ENCODE measurements at regions of chr10 and their contacts with region 1.

Region 1: DNA sequence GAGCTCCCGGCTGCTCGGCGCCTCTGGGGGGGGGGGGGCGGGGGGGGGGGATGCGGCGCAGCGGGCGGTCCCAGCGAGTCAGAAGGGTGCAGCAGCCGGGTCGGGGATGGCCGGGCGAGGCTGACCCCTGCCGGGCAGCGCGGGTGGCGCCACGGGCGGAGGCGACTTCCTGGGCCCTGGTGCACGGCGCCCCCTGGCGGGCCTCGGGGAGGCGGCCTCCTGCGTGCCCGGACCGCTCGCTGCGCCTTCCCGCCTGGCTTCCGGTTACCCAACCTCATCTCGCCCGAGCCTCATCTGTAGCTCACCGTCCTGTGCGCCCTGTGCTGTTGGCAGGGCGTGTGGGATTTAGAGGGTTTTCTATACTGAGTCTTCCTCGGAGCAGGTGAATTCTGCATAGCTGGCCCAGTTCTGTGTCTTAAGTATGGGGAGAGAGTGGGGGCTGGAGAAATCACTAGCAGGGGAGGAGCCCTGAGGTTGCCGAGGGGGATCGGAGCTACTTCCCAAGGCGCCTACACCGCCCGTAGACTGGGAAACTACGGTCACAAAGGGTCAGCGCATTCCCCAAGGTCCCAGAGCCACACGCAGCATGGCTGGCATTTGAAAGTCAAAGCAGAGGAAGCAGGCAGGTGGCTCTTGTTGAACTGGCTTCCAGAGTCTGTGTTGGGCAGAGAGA is 28.3 kb upstream of the WDFY4 start:
- DNase-seq: peak; percentile 92
- CTCF ChIP-seq: peak; percentile 100

Region 2: DNA sequence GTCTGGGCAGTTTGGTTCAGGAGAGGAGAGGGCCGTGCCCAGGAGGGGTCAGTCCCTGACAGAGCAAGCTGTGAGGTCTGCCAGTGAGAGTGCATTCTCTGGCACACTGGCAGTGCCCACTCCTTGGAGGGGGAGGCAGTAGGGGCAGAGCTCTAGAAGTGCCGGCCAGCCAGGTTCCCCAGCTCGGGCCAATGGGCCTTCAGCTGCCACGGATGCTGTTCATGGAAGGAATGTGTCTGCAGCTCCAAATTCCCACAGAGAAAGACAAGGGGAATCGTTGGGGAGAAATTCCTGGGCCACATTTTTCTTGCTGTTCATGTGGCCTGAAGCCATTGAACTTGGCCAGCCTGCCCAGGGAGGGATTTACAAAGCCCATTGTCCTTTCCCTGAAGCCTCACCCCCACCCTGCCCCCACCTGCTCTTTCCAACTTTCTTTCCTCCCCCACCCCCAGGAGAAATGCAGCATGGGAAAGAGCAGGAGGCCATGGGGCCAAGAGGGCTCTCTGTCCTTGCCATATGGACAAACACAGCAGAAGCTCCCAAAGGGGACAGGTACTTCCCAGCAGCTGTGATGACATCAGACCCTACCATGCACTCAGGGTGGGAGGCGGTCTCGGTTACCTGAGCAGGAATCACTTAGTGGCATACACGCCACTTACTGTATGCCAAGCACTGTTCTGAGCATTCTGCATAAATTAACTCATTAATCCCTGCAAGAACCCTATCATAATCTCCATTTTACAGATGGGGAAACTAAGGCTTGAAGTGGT is 122.2 kb before region 1 on chr10:
- CTCF ChIA-PET with region 1: interaction called, 14 read pairs
- POLR2A ChIA-PET with region 1: no interaction called
- DNase-seq: no peak
- CTCF ChIP-seq: no peak

Region 3: DNA sequence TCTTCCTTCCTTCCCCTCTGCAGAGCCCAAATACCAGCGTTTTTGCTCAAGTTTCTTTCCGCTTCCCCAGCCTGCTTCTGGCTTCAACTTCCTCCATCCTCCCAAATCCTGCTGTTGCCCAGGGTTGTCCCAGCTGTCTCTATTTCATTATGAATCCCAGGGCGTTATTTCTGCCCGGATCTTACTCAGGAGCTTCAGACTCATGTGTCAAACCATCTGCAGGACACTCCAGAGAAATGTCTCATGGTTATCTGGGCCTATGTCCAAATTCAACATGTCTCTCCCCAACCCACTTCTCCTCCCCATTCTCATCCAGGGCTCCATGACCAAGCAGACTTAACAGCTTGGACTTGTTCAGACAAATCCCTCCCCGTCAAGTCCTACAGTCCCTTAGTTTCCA is 67.1 kb before region 1 on chr10:
- CTCF ChIA-PET with region 1: interaction called, 14 read pairs
- POLR2A ChIA-PET with region 1: no interaction called
- DNase-seq: no peak
- CTCF ChIP-seq: no peak

Region 4: GRCh38 chr10:48634198-48634983 is 22.0 kb before region 1 on chr10:
- CTCF ChIA-PET with region 1: interaction called, 91 read pairs
- POLR2A ChIA-PET with region 1: no interaction called
- DNase-seq: no peak
- CTCF ChIP-seq: no peak

Region 5: GRCh38 chr10:48725686-48726085 is 69.3 kb after region 1 on chr10:
- CTCF ChIA-PET with region 1: interaction called, 35 read pairs
- POLR2A ChIA-PET with region 1: no interaction called
- DNase-seq: no peak
- CTCF ChIP-seq: no peak

Region 6: GRCh38 chr10:48792687-48793096 is 136.3 kb after region 1 on chr10:
- CTCF ChIA-PET with region 1: interaction called, 18 read pairs
- POLR2A ChIA-PET with region 1: no interaction called
- DNase-seq: no peak
- CTCF ChIP-seq: no peak

Region 7: GRCh38 chr10:49407552-49408137 is 751.3 kb after region 1 on chr10:
- CTCF ChIA-PET with region 1: interaction called, 13 read pairs
- POLR2A ChIA-PET with region 1: no interaction called
- DNase-seq: peak; percentile 84
- CTCF ChIP-seq: peak; percentile 93

Measured in GM10248 (cell line).